A549 (cell line): ENCODE measurements at regions of chr6 and their contacts with region 1.

Region 1: GRCh38 chr6:36678518-36679027 is at the start of gene CDKN1A:
- DNase-seq: peak; percentile 66 to 86
- ATAC-seq: peak; percentile 77 to 89
- H3K4me3 ChIP-seq: peak within 1 kb of the TSS; percentile 86
- H3K27ac ChIP-seq: peak within 1 kb of the TSS; percentile 86 to 94
- H3K4me1 ChIP-seq: peaks cover 50% of the 10 kb centered on the region
- CTCF ChIP-seq: no peak
- EP300 ChIP-seq: peak in 1 of 2 experiments; percentile 12; a peak in 1 of 5 replicates
- POLR2A ChIP-seq: peak; percentile 98
- RAD21 ChIP-seq: 0 out of 5 replicates have a peak, but pooled peaks of 1 of the 2 experiments have one; percentile 17
- polyA plus RNA-seq, gene CDKN1A: 183 and 192 TPM in 2 replicates

Region 2: GRCh38 chr6:36642913-36643817 is 35.4 kb before region 1 on chr6:
- CTCF ChIA-PET with region 1: interaction called, 14 read pairs
- POLR2A ChIA-PET with region 1: interaction called, 35 read pairs
- DNase-seq: peak; percentile 44 to 73
- ATAC-seq: peak; percentile 94 to 97
- H3K4me3 ChIP-seq: no peak overlapping the region
- H3K27ac ChIP-seq: peak overlapping the region; percentile 91 to 99
- H3K4me1 ChIP-seq: peaks cover 44% of the 10 kb centered on the region
- CTCF ChIP-seq: no peak
- EP300 ChIP-seq: no peak
- POLR2A ChIP-seq: no peak
- RAD21 ChIP-seq: no peak

Region 3: GRCh38 chr6:36666726-36667591 is 11.6 kb before region 1 on chr6:
- CTCF ChIA-PET with region 1: interaction called, 7 read pairs
- POLR2A ChIA-PET with region 1: interaction called, 27 read pairs
- DNase-seq: peak in 1 of 2 experiments; percentile 69
- ATAC-seq: peak; percentile 82 to 86
- H3K4me3 ChIP-seq: no peak overlapping the region
- H3K27ac ChIP-seq: peak overlapping the region; percentile 91 to 93
- H3K4me1 ChIP-seq: peaks cover 38% of the 10 kb centered on the region
- CTCF ChIP-seq: no peak
- EP300 ChIP-seq: no peak
- POLR2A ChIP-seq: no peak
- RAD21 ChIP-seq: peak in 1 of 2 experiments; percentile 22; a peak in 2 of 5 replicates

Region 4: GRCh38 chr6:36769676-36770499 is 91.3 kb after region 1 on chr6:
- CTCF ChIA-PET with region 1: no interaction called
- POLR2A ChIA-PET with region 1: no interaction called
- DNase-seq: no peak
- ATAC-seq: no peak
- H3K4me3 ChIP-seq: no peak overlapping the region
- H3K27ac ChIP-seq: no peak overlapping the region
- H3K4me1 ChIP-seq: no peaks in the 10 kb centered on the region
- CTCF ChIP-seq: no peak
- EP300 ChIP-seq: no peak
- POLR2A ChIP-seq: no peak
- RAD21 ChIP-seq: no peak